K562 (cell line): ENCODE measurements at regions of chr5 and their contacts with region 1.

Region 1: DNA sequence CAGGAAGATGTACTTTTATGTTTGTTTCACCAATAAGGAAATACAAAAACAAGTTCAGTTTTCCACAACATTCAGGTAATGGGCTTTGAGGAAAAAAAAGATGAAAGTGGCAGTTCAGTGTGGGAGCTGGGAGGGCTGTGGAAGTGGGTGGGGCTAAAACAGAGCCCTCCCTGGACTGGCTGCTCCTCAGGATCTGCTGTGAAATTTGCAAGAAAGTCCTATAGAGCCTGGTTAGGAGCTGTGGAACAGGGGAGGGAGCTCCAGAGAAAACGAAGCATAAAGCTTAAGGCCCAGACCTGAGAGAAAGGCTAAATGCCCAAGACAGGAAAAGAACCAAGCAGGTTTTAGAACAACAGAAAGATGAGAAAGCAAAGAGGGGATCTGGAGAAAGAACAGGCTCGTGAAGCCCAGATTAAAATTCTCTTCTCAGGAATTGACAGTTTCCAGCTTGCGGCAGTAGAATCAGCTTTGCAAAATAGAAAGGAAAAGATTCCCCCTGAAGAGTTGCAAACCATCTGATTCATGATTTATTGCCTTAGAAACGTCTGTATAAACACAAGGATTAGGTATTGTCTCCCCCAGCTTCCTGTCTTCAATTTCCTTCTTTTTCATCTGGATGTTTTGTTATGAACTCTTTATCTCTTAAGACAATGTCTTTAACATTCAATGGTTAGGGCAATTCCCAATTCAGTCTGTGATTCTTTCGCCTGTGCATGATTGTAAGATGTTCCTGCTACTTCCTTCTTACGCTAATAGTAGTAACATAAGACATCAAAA is 26.3 kb upstream of the CRHBP start:
- DNase-seq: no peak
- ATAC-seq: no peak
- H3K4me3 ChIP-seq: no peak overlapping the region
- H3K27ac ChIP-seq: no peak overlapping the region
- H3K4me1 ChIP-seq: no peaks in the 10 kb centered on the region
- H3K27me3 ChIP-seq: peaks cover 25 to 31% of the 10 kb centered on the region in 2 experiments; a peak in 4 of 5 replicates
- CTCF ChIP-seq: no peak
- EP300 ChIP-seq: no peak
- POLR2A ChIP-seq: no peak
- RAD21 ChIP-seq: no peak

Region 2: DNA sequence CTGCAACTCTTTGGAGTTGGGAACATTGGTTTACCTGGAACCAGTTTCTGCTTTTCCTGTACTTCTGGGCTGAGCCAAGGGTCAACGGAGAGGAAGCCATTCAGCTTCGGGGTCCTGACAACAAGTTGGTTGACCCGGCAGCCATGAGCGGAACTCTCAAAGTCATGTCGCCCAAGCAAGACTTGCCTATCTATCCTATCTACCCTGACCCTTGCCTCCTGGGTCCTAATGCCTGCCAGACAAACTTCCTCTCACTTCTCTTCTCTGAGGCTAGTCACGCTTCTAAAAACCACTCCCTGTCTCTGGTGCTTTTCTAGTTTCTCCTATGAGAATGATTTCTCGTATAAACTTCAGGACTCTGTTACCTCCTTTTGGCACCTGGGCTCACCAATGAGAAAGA is 18.4 kb before region 1 on chr5:
- CTCF ChIA-PET with region 1: no interaction called
- POLR2A ChIA-PET with region 1: no interaction called
- in situ Hi-C with region 1: no loop called
- intact Hi-C with region 1: loop called (anchors 1 kb)
- DNase-seq: peak in 2 of 4 experiments; percentile 1 to 11
- ATAC-seq: no peak
- H3K4me3 ChIP-seq: no peak overlapping the region
- H3K27ac ChIP-seq: no peak overlapping the region
- H3K4me1 ChIP-seq: no peaks in the 10 kb centered on the region; a peak in 2 of 5 replicates
- H3K27me3 ChIP-seq: no peaks in the 10 kb centered on the region
- CTCF ChIP-seq: no peak
- EP300 ChIP-seq: no peak
- POLR2A ChIP-seq: no peak
- RAD21 ChIP-seq: no peak